ENCODE measurements at regions of chr1 and their contacts with region 1.

Region 1: GRCh38 chr1:37474046-37474759 is at the start of gene ZC3H12A:
- DNase-seq: peak; percentile 75
- ATAC-seq: peak; percentile 69
- H3K4me3 ChIP-seq: peak within 1 kb of the TSS; percentile 80
- H3K27ac ChIP-seq: peak within 1 kb of the TSS; percentile 91
- H3K4me1 ChIP-seq: peaks cover 70 to 80% of the 10 kb centered on the region in 2 experiments
- H3K27me3 ChIP-seq: 0 out of 2 replicates have a peak, but pooled peaks cover 3% of the 10 kb centered on the region
- CTCF ChIP-seq: no peak
- POLR2A ChIP-seq: peak; percentile 64
- RAD21 ChIP-seq: no peak
- total RNA-seq, gene ZC3H12A: 10.6 TPM

Region 2: DNA sequence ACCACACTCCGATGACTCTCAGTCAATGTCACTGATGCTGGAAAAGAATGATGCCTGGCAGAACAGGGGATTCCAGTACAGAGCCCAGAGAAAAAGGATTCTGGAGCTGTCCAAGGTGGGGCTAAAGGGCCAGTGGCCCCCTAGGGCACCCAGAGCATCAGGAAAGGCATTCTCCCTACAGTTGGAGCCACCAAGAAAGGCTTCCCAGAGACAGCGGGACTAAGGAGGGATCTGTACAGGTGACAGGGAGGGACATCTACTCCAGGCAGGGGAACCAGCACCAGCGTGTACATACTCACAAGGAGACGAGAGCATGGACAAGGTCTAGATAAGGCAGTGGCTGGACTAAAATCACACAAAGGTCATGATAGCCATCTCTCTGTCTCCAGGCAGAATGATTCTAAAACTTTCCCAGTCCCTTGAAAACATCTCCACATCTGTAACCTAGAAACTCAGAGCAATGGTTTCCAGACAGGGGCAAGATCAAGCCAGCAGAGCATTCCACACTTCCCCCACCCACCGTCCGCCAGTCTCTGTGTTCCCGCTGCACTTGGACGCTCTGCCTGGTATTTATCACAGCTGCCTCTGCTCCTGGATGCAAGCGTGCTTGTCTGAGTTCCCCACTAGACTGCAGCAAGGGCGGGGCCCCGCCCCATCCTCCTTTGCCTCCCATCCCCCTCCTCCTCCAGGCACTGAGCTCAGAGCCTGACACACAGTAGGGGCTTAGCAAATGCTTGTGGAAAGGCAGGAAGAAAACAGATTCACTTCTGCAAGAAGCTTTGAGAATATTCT is 111.4 kb before region 1 on chr1:
- CTCF ChIA-PET with region 1: no interaction called
- POLR2A ChIA-PET with region 1: no interaction called
- RAD21 ChIA-PET with region 1: no interaction called
- intact Hi-C with region 1: no loop called
- DNase-seq: no peak
- ATAC-seq: no peak
- H3K4me3 ChIP-seq: no peak overlapping the region
- H3K27ac ChIP-seq: no peak overlapping the region
- H3K4me1 ChIP-seq: no peaks in the 10 kb centered on the region
- H3K27me3 ChIP-seq: peaks cover 80% of the 10 kb centered on the region
- CTCF ChIP-seq: no peak
- POLR2A ChIP-seq: no peak
- RAD21 ChIP-seq: no peak

Region 3: GRCh38 chr1:37553927-37554808 is 80.0 kb after region 1 on chr1 and contains the start of gene SNIP1:
- CTCF ChIA-PET with region 1: no interaction called
- POLR2A ChIA-PET with region 1: no interaction called
- RAD21 ChIA-PET with region 1: no interaction called
- intact Hi-C with region 1: no loop called
- DNase-seq: peak; percentile 85
- ATAC-seq: peak; percentile 88
- H3K4me3 ChIP-seq: peak within 1 kb of the TSS; percentile 98 to 99
- H3K27ac ChIP-seq: peak within 1 kb of the TSS; percentile 71
- H3K4me1 ChIP-seq: peaks cover 15 to 28% of the 10 kb centered on the region in 2 experiments
- H3K27me3 ChIP-seq: no peaks in the 10 kb centered on the region
- CTCF ChIP-seq: no peak
- POLR2A ChIP-seq: peak; percentile 36
- RAD21 ChIP-seq: no peak
- total RNA-seq, gene SNIP1: 18.8 TPM

Region 4: GRCh38 chr1:37595440-37596319 is 121.5 kb after region 1 on chr1 and contains the start of gene GNL2:
- CTCF ChIA-PET with region 1: no interaction called
- POLR2A ChIA-PET with region 1: interaction called, 3 read pairs
- RAD21 ChIA-PET with region 1: no interaction called
- intact Hi-C with region 1: loop called (anchors 5 kb)
- DNase-seq: peak; percentile 92
- ATAC-seq: peak; percentile 99
- H3K4me3 ChIP-seq: peak within 1 kb of the TSS; percentile 98 to 100
- H3K27ac ChIP-seq: peak within 1 kb of the TSS; percentile 52
- H3K4me1 ChIP-seq: peaks cover 10 to 16% of the 10 kb centered on the region in 2 experiments; a peak in 2 of 4 replicates
- H3K27me3 ChIP-seq: no peaks in the 10 kb centered on the region
- CTCF ChIP-seq: no peak
- POLR2A ChIP-seq: peak; percentile 57
- RAD21 ChIP-seq: no peak
- total RNA-seq, gene GNL2: 79.2 TPM

Region 5: DNA sequence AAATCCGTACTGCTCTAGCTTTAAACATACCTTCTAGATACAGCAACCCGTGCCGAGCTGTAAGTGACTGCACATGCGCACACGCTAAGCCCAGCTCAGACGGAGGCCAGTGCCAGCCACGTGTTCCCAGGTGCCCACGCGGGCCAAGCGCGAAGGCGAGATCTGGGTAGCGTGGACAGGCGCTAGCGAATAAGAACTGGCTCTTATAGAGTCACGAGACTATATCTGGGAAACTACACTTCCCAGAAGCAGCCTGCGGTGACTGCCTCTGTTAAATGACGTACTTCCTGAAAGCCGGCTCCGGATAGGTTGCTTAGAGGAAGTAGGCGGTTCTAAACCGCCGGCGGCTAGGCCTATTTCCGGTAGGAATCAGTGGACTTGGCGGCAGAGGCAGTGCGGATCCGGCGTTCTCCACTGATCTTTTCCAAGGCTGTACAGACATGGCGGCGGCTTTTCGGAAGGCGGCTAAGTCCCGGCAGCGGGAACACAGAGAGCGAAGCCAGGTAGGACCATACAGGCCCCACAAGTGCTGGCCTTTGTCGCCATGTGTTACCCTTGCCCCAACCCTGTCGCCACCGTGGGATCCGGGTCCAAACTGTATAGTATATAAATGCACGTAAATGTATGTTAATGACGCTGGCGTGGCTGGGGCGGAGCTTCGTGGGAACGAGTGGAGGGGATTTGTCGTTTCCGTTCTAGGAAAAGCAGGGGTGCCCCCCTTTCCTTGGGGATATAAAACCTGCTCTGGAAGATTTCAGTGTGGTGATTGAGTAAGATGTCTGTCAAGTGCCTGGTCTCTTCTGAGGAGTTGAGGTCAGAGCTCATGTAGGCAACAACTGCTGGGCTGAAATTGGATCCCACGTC is 538.4 kb after region 1 on chr1 and contains the start of gene UTP11:
- CTCF ChIA-PET with region 1: no interaction called
- POLR2A ChIA-PET with region 1: no interaction called
- RAD21 ChIA-PET with region 1: no interaction called
- intact Hi-C with region 1: loop called (anchors 5 kb)
- DNase-seq: peak; percentile 100
- ATAC-seq: peak; percentile 95
- H3K4me3 ChIP-seq: peak within 1 kb of the TSS; percentile 89 to 95
- H3K27ac ChIP-seq: peak within 1 kb of the TSS; percentile 84
- H3K4me1 ChIP-seq: peaks cover 16 to 34% of the 10 kb centered on the region in 2 experiments; a peak in 3 of 4 replicates
- H3K27me3 ChIP-seq: no peaks in the 10 kb centered on the region
- CTCF ChIP-seq: no peak
- POLR2A ChIP-seq: peak; percentile 77
- RAD21 ChIP-seq: no peak
- total RNA-seq, gene UTP11: 47.5 TPM

Region 6: GRCh38 chr1:39398278-39399021 is 1924.2 kb after region 1 on chr1:
- CTCF ChIA-PET with region 1: no interaction called
- POLR2A ChIA-PET with region 1: no interaction called
- RAD21 ChIA-PET with region 1: no interaction called
- intact Hi-C with region 1: loop called (anchors 10 kb)
- DNase-seq: peak; percentile 98
- ATAC-seq: peak; percentile 86
- H3K4me3 ChIP-seq: peak overlapping the region; percentile 15 to 50; a peak in 2 of 4 replicates
- H3K27ac ChIP-seq: peak overlapping the region; percentile 91
- H3K4me1 ChIP-seq: peaks cover 67 to 78% of the 10 kb centered on the region in 2 experiments
- H3K27me3 ChIP-seq: no peaks in the 10 kb centered on the region
- CTCF ChIP-seq: no peak
- POLR2A ChIP-seq: no peak
- RAD21 ChIP-seq: peak; percentile 30

Measured in HCT116 (cell line).